ENCODE measurements at regions of chr15 and their contacts with region 1.

Region 1: GRCh38 chr15:68304589-68305337 is 27.2 kb downstream of the FEM1B start:
- DNase-seq: peak in 1 of 2 donors; percentile 18
- H3K4me3 ChIP-seq: no peak overlapping the region
- H3K27ac ChIP-seq: no peak overlapping the region
- H3K4me1 ChIP-seq: peaks cover 1 to 22% (median 12%) of the 10 kb centered on the region in 4 donors
- H3K27me3 ChIP-seq: no peaks in the 10 kb centered on the region
- CTCF ChIP-seq: no peak
- EP300 ChIP-seq: no peak
- POLR2A ChIP-seq: no peak

Region 2: GRCh38 chr15:68252925-68253534 is 51.7 kb before region 1 on chr15:
- intact Hi-C with region 1: loop called (anchors 10 kb)
- DNase-seq: peak; percentile 37 to 87
- H3K4me3 ChIP-seq: no peak overlapping the region
- H3K27ac ChIP-seq: no peak overlapping the region
- H3K4me1 ChIP-seq: peaks cover 5 to 23% (median 13%) of the 10 kb centered on the region in 4 donors
- H3K27me3 ChIP-seq: no peaks in the 10 kb centered on the region
- CTCF ChIP-seq: peak in 5 of 7 experiments; percentile 57 to 86 (median 80)
- EP300 ChIP-seq: no peak
- POLR2A ChIP-seq: no peak

Region 3: GRCh38 chr15:68383161-68384074 is 78.7 kb after region 1 on chr15:
- intact Hi-C with region 1: loop called (anchors 10 kb)
- DNase-seq: peak; percentile 26 to 64
- H3K4me3 ChIP-seq: no peak overlapping the region
- H3K27ac ChIP-seq: peak overlapping the region in 2 of 5 donors; percentile 52 to 53
- H3K4me1 ChIP-seq: peaks cover 0 to 7% (median 0%) of the 10 kb centered on the region in 4 donors
- H3K27me3 ChIP-seq: no peaks in the 10 kb centered on the region
- CTCF ChIP-seq: peak in 5 of 7 experiments; percentile 19 to 63 (median 51)
- EP300 ChIP-seq: no peak
- POLR2A ChIP-seq: no peak

Region 4: DNA sequence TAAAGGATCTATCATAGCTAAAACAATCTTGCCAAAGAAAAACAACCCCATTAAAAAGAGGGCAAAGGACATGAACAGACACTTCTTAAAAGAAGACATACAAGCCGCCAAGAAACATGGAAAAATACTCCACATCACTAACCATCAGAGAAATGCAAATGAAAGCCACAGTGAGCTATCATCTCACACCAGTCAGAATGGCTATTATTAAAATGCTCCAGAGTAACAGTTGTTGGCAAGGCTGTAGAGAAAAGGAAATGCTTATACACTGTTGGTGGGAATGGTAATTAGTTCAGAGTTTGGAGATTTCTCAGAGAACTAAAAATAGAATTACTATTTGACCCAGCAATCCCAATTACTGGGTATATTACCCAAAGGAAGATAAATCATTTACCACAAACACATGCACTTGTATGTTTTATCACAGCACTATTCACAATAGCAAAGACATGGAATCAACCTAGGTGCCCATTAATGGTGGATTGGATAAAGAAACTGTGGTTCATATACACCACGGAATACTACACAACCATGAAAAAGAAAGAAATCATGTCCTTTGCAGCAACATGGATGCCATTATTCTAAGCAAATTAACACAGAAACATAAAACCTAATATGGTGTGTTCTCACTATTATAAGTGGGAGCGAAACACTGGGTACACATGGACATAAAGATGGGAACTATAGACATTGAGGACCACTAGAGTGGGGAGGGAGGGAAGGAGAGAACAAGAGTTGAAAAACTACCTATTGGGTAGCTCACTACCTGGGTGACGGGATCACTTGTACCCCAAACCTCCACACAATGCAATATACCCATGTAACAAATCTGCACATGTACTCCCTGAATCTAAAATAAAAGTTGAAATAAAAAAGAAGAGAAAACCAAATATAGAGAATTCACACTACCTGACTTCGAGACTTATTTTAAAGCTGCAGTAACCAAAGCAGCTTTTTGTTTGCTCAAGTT is 94.6 kb after region 1 on chr15:
- intact Hi-C with region 1: no loop called
- DNase-seq: no peak
- H3K4me3 ChIP-seq: no peak overlapping the region
- H3K27ac ChIP-seq: no peak overlapping the region
- H3K4me1 ChIP-seq: no peaks in the 10 kb centered on the region
- H3K27me3 ChIP-seq: no peaks in the 10 kb centered on the region
- CTCF ChIP-seq: no peak
- EP300 ChIP-seq: no peak
- POLR2A ChIP-seq: no peak

Region 5: GRCh38 chr15:68410466-68411342 is 105.9 kb after region 1 on chr15:
- intact Hi-C with region 1: no loop called
- DNase-seq: no peak
- H3K4me3 ChIP-seq: no peak overlapping the region
- H3K27ac ChIP-seq: no peak overlapping the region
- H3K4me1 ChIP-seq: no peaks in the 10 kb centered on the region
- H3K27me3 ChIP-seq: peaks cover 0 to 6% (median 0%) of the 10 kb centered on the region in 3 donors
- CTCF ChIP-seq: no peak
- EP300 ChIP-seq: no peak
- POLR2A ChIP-seq: no peak

Measured in stomach (tissue), 19 donors.